Mammary epithelial cell (primary cell): ENCODE measurements at regions of chr9 and their contacts with region 1.

Region 1: DNA sequence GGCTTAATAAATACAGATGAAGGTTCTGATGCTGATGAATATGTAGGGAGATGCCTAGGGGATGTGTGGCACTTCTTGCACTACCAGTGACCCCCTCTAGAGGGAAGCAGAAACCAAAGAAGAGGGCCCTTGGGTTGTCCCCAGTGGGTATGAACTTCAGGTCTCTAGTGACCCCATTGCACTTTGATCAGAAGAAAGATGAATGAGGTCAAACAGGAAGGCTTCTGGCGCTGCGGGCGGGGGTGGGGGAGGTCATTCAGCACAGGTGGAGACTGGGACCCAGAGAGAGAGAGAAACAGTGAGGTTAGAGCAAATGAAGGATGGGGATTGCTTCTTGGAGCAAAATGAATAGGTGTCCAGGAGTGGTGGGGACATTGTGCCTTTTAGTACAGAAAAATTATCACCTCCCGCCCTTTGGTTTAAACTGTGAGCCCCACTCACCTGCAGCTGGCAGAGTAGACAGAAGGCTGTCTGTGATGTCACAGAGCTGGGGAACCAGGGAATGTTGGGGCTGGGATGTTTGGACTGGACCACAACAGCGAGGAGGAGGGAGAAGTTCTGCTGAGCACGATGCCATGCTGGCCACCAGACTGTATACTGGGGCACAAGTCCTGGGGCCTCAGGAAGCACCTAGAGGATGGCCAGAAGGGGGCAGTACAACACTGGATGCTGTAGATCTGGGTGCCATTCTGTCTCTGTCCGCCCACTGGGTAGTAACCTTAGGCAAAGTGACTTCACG is at the start of gene TEX48:
- DNase-seq: peak; percentile 73
- H3K4me3 ChIP-seq: no peak within 1 kb of the TSS
- H3K27ac ChIP-seq: no peak within 1 kb of the TSS
- H3K4me1 ChIP-seq: peaks cover 33% of the 10 kb centered on the region
- H3K27me3 ChIP-seq: no peaks in the 10 kb centered on the region
- CTCF ChIP-seq: peak; percentile 84 to 95
- total RNA-seq, gene TEX48: not detected

Region 2: DNA sequence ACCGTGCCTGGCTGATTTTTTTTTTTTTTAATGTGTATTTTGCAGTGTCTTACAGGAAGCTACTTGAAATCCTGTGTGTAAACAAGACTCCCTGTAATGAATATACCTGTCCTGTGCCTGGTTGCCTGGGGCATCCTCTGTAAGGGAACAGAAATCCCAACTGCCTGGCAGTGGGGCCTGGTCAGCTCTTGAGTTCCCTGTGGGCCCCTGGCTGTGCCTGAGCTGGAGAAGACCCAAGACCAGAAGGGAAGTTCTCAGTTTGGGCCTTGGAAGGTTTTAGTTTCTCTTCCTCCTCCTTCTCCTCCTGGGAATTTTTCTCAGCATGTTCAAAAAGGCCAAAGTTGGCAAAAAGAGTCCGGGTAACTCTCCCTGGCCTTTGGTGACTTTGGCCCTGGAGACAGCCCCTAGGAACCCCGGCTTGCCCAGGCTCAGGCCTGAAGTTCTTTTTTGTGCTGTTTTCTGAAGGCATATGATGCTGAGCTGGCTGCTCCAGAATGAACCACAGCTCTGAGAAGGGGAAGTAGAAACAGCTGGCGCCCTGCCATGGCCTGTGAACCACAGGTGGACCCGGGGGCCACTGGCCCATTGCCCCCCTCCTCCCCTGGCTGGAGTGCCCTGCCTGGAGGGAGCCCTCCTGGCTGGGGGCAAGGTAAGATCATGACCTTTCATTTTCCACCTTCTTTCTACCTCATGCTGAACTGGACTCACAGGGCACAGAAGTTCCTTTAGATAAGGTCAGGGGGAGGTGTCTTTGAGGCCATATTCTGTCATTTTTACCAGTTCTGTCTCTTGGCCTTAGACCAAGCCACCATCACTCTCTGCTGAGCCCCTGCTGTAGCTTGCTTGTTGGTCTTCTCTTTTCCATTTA is 64.9 kb before region 1 on chr9:
- CTCF ChIA-PET with region 1: no interaction called
- dilution Hi-C with region 1: no loop called
- in situ Hi-C with region 1: no loop called
- intact Hi-C with region 1: no loop called
- DNase-seq: no peak
- H3K4me3 ChIP-seq: no peak overlapping the region
- H3K27ac ChIP-seq: no peak overlapping the region
- H3K4me1 ChIP-seq: peaks cover 5% of the 10 kb centered on the region
- H3K27me3 ChIP-seq: no peaks in the 10 kb centered on the region
- CTCF ChIP-seq: no peak

Region 3: DNA sequence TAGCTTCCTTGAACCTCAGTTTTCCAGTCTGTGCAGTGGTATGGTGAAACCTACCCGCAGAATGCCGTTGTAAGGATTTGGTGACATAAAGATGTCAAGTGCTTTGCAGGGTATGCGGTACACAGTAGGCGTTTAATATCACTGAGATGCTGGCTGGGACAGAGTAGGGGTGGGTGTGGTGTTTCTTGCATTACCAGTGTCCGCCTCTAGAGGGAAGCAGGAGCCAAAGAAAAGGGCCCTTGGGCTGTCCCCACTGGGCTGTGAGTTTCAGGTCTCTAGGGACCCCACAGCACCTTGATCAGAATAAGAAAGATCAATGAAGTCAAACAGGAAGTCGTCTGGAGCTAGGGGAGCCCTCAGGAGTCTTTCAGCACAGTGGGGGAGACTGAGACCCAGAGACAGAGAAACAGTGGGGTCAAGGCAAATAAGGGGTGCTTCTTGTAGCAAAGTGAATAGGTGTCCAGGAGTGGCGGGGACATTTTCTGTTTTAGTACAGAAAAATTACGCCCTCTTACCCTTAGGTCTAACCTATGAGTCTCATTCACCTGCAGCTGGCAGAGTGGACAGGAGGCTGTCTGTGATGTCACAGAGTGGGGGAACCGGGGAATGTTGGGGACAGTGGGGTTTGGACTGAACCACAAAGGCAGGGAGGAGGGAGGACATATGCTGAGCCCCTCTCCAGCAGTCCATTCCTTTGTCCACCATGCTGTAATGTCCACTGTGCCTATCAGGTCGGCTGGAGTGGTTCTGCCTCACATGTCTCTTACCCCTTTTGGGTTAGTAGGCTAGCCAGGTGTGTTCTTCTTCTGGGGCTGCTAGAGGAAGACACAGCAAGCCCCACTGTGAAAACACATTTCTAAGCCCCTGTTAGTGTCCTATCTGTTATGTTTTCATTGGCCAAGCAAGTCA is 19.4 kb before region 1 on chr9:
- CTCF ChIA-PET with region 1: no interaction called
- dilution Hi-C with region 1: no loop called
- in situ Hi-C with region 1: no loop called
- intact Hi-C with region 1: loop called (anchors 1 kb)
- DNase-seq: peak; percentile 29
- H3K4me3 ChIP-seq: no peak overlapping the region
- H3K27ac ChIP-seq: no peak overlapping the region
- H3K4me1 ChIP-seq: peaks cover 13% of the 10 kb centered on the region
- H3K27me3 ChIP-seq: no peaks in the 10 kb centered on the region
- CTCF ChIP-seq: peak; percentile 79 to 91

Region 4: DNA sequence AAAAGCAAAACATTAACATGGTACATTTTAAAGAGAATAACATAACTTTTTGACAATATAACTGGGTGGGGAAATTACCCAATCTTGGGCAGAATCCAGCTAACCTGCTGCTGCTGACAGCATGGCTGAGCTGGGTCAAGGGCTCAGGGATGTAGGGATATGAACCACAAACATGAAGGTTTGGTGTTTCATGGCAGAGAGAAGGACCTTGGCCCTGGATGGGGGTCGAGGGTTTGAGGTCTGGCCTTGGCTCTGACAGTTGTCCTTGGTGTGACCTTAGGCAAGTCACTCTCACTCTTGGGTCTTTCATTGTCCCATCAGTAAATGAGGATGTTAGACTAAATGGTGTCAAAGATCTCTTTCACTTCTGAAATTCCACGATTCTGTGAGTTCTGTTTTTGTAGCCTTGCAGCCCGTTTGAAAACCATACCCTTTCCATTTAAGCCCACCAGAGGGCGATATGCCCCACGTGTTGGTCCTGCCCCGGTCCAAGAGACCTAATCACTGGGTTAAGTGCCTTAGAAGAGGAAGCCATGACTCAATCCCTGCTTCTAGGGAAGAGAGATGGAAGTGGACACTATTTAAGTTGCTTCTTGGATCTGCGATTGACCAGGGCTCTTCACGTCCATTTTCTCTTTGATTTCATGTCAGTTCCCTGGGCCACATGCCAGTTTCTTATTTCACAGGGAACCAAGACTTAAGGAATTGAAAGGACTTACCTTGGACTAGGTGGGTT is 57.0 kb after region 1 on chr9:
- CTCF ChIA-PET with region 1: no interaction called
- dilution Hi-C with region 1: no loop called
- in situ Hi-C with region 1: loop called in 1 of 2 experiments (anchors 5 kb)
- intact Hi-C with region 1: loop called (anchors 1 kb)
- DNase-seq: peak; percentile 78
- H3K4me3 ChIP-seq: no peak overlapping the region
- H3K27ac ChIP-seq: no peak overlapping the region
- H3K4me1 ChIP-seq: peaks cover 5% of the 10 kb centered on the region
- H3K27me3 ChIP-seq: no peaks in the 10 kb centered on the region
- CTCF ChIP-seq: peak; percentile 71 to 81

Region 5: GRCh38 chr9:114805670-114806525 is 124.1 kb after region 1 on chr9 and contains the start of gene TNFSF15:
- CTCF ChIA-PET with region 1: no interaction called
- dilution Hi-C with region 1: no loop called
- in situ Hi-C with region 1: no loop called
- intact Hi-C with region 1: loop called (anchors 5 kb)
- DNase-seq: peak; percentile 82
- H3K4me3 ChIP-seq: peak within 1 kb of the TSS; percentile 12 to 37 (median 14)
- H3K27ac ChIP-seq: peak within 1 kb of the TSS; percentile 64
- H3K4me1 ChIP-seq: peaks cover 36% of the 10 kb centered on the region
- H3K27me3 ChIP-seq: no peaks in the 10 kb centered on the region
- CTCF ChIP-seq: peak in 1 of 2 donors; percentile 8
- total RNA-seq, gene TNFSF15: 1.3 to 2.1 TPM

Region 6: DNA sequence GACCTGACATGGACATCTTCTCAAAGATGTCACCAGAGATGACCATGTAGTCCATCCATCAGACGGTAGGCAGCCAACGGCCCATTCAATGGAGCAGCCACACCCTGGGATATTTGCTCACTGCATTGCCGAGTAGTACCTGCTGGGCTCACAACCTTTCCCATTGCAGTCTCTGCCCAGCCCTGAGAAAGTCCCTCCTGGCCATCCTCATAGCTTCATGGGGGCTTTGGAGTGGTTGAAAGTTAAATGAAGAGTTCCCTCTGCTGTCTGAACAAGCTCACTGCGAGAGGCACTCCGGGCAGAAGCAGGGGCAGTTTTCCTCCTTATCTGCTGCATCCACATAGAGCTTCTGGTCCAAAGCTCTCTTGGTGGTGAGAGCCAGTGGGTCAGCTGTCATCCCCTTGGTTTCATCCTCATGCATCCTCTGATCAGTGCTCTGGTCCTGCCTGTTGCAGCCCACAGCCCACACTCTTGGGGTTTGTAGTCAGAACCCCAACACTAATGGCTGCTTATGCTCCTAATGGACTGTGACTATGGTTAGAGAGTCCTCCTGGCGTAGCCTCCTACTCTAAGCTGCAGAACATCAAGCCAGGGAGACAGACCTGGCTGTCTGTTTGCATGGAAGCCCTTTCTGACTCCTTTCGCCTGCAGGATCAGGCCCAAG is 225.3 kb after region 1 on chr9:
- CTCF ChIA-PET with region 1: no interaction called
- dilution Hi-C with region 1: no loop called
- in situ Hi-C with region 1: loop called (anchors 5 to 10 kb)
- intact Hi-C with region 1: loop called (anchors 1 kb)
- DNase-seq: peak; percentile 48
- H3K4me3 ChIP-seq: no peak overlapping the region
- H3K27ac ChIP-seq: no peak overlapping the region
- H3K4me1 ChIP-seq: peaks cover 31% of the 10 kb centered on the region
- H3K27me3 ChIP-seq: no peaks in the 10 kb centered on the region
- CTCF ChIP-seq: peak; percentile 61 to 62

Region 7: DNA sequence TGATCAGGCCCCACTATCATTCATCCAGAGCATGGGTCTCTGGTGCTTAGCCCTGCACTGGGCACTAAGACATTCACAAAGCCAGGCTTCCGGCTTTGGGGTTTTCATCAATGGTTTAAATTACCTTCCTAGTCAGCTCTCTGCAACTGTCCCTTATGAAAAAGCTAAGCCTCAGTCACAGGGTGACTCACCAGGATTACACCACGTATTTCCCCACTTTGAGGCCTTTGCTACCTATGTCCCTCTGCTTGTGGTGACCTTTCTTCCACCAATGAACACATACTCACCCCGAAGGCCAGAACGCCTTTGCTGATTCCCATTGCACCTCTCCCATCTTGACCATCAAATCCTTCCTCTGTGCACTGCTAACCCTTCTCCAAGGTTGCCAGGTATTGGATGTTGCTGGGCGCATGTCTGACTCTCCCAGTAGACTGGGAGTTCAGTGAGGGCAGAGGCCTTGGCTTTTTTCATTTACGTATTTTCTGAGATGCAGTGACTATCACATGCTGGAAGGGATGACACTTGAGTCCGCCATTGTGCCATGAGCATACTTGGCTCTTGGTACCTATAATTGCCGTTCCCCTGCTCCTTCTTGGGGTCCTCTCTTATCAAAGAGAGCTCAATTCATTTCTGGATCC is 307.3 kb after region 1 on chr9:
- CTCF ChIA-PET with region 1: no interaction called
- dilution Hi-C with region 1: no loop called
- in situ Hi-C with region 1: no loop called
- intact Hi-C with region 1: no loop called
- DNase-seq: peak; percentile 45
- H3K4me3 ChIP-seq: no peak overlapping the region
- H3K27ac ChIP-seq: no peak overlapping the region
- H3K4me1 ChIP-seq: no peaks in the 10 kb centered on the region
- H3K27me3 ChIP-seq: peaks cover 4% of the 10 kb centered on the region
- CTCF ChIP-seq: no peak

Region 8: DNA sequence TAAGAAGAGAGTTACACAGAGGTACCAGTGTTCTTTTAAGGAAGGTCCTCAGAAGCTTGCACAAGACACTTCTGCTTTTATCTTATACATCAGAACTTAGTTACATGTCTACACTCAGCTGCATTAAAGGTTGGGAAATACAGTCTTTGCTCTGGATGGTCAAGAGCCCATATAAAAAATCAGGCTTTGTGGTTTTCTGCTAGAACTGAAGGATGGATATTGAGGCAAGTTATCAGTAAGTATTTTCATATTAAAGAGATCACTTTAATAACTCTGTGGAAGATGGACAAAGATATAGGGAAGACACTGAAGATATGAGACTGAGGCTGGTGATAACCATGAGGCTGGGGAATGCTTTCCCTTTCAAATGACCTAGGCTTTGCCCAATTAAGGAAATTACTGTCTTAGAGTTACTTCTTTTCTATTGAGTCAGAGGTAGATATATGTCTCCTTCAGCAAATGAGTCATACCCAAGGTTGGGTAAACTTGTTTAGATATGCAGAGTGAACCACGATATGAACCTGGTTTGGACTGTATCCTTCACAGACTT is 523.2 kb after region 1 on chr9:
- CTCF ChIA-PET with region 1: no interaction called
- dilution Hi-C with region 1: no loop called
- in situ Hi-C with region 1: loop called in 1 of 2 experiments (anchors 25 kb)
- intact Hi-C with region 1: no loop called
- DNase-seq: peak; percentile 92
- H3K4me3 ChIP-seq: no peak overlapping the region
- H3K27ac ChIP-seq: peak overlapping the region; percentile 63
- H3K4me1 ChIP-seq: peaks cover 65% of the 10 kb centered on the region
- H3K27me3 ChIP-seq: no peaks in the 10 kb centered on the region
- CTCF ChIP-seq: no peak